B cell (primary cell): ENCODE measurements at regions of chr6 and their contacts with region 1.

Region 1: GRCh38 chr6:33008944-33009861 is at the start of gene HLA-DOA:
- DNase-seq: peak; percentile 90
- ATAC-seq: peak; percentile 95
- H3K4me3 ChIP-seq: peak within 1 kb of the TSS; percentile 60 to 98 (median 92)
- H3K4me3 Mint-ChIP-seq: peak within 1 kb of the TSS; percentile 94
- H3K27ac ChIP-seq: peak within 1 kb of the TSS; percentile 90 to 95
- H3K27ac Mint-ChIP-seq: peak within 1 kb of the TSS; percentile 98
- H3K4me1 ChIP-seq: peaks cover 33 to 39% of the 10 kb centered on the region in 2 donors
- H3K4me1 Mint-ChIP-seq: peaks cover 59% of the 10 kb centered on the region
- H3K27me3 ChIP-seq: no peaks in the 10 kb centered on the region
- H3K27me3 Mint-ChIP-seq: no peaks in the 10 kb centered on the region
- CTCF ChIP-seq: no peak
- total RNA-seq, gene HLA-DOA: 209 TPM in 2 replicates

Region 2: DNA sequence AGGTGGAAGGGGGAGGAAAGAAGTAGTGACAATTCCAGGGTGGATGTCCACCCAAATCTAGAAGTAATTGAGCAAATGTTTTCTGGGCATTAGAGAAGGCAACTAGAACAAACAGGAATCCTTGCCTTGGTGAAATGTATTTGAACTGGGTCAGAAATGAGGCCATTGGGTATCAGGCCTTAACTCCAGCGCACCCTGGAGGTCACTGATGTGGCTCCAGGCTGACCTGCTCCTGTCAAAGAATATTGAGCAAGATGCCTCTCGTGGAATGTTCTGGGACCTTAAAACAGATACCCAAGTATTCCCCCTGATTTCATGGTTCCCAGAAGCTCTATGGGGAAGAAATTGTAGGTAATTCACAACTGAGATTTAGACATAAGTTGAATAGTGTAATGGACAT is 73.5 kb after region 1 on chr6:
- CTCF ChIA-PET with region 1: interaction called, 576 read pairs
- POLR2A ChIA-PET with region 1: interaction called, 36 read pairs
- intact Hi-C with region 1: loop called (anchors 1 kb)
- DNase-seq: peak; percentile 65
- ATAC-seq: peak; percentile 63
- H3K4me3 ChIP-seq: peak overlapping the region in 1 of 5 experiments; percentile 7
- H3K4me3 Mint-ChIP-seq: peak overlapping the region; percentile 78
- H3K27ac ChIP-seq: peak overlapping the region; percentile 27 to 82
- H3K27ac Mint-ChIP-seq: peak overlapping the region; percentile 89
- H3K4me1 ChIP-seq: peaks cover 59 to 60% of the 10 kb centered on the region in 2 donors
- H3K4me1 Mint-ChIP-seq: peaks cover 72% of the 10 kb centered on the region
- H3K27me3 ChIP-seq: no peaks in the 10 kb centered on the region
- H3K27me3 Mint-ChIP-seq: no peaks in the 10 kb centered on the region
- CTCF ChIP-seq: peak; percentile 68

Region 3: GRCh38 chr6:33241968-33242367 is 232.8 kb after region 1 on chr6:
- CTCF ChIA-PET with region 1: no interaction called
- POLR2A ChIA-PET with region 1: no interaction called
- intact Hi-C with region 1: no loop called
- DNase-seq: no peak
- ATAC-seq: no peak
- H3K4me3 ChIP-seq: no peak overlapping the region
- H3K4me3 Mint-ChIP-seq: no peak overlapping the region
- H3K27ac ChIP-seq: no peak overlapping the region
- H3K27ac Mint-ChIP-seq: no peak overlapping the region
- H3K4me1 ChIP-seq: no peaks in the 10 kb centered on the region
- H3K4me1 Mint-ChIP-seq: peaks cover 3% of the 10 kb centered on the region
- H3K27me3 ChIP-seq: peaks cover 0 to 8% (median 0%) of the 10 kb centered on the region in 4 experiments
- H3K27me3 Mint-ChIP-seq: peaks cover 34% of the 10 kb centered on the region
- CTCF ChIP-seq: no peak